ENCODE measurements at regions of chr17 and their contacts with region 1.

Region 1: DNA sequence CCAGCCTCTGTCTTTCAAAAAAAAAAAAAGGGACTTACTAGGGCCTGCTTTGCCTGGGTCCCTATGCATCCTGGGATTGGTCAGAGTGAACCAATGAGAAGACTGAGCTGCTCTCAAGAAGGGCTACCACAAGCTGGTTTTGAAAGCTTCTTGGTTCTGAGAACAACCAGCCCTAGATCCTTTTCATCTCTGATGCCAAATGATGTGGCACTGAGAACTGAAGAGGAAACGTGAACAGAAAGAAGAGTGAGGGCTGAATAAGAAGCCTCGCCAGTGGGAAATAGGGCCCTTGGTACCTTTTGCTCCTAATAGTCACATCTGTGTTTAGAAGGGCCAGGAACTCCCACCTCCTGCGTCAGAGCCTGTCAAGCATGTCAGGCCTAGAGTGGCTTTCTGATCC is 10.7 kb downstream of the TACO1 start:
- DNase-seq: no peak
- H3K4me3 ChIP-seq: no peak overlapping the region
- H3K27ac ChIP-seq: no peak overlapping the region
- H3K4me1 ChIP-seq: peaks cover 0 to 1% (median 0%) of the 10 kb centered on the region in 4 experiments
- H3K27me3 ChIP-seq: no peaks in the 10 kb centered on the region

Region 2: DNA sequence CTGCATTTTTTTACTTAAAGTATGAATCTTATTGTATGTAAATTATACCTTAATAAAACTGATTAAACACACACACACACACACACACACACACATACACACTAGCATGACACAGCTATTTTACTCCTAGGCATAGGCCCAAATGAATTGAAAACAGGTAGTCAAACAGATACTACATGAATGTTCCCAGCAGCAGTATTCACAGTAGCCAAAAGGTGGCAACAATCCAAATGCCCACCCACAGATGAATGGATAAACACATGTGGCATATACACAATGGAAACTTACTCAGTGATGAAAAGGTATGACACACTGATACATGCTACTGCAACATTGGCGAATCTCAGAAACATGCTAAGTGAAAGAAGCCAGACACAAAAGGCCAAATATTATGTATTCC is 388.7 kb before region 1 on chr17:
- CTCF ChIA-PET with region 1: no interaction called
- POLR2A ChIA-PET with region 1: no interaction called
- DNase-seq: peak in 2 of 3 donors; percentile 15 to 24
- H3K4me3 ChIP-seq: no peak overlapping the region
- H3K27ac ChIP-seq: no peak overlapping the region
- H3K4me1 ChIP-seq: no peaks in the 10 kb centered on the region
- H3K27me3 ChIP-seq: no peaks in the 10 kb centered on the region

Region 3: GRCh38 chr17:63600569-63601438 is 10.6 kb before region 1 on chr17 and contains the start of gene TACO1:
- CTCF ChIA-PET with region 1: interaction called, 25 read pairs
- POLR2A ChIA-PET with region 1: interaction called, 3 read pairs
- DNase-seq: peak; percentile 82 to 84 (median 82)
- H3K4me3 ChIP-seq: peak within 1 kb of the TSS; percentile 60 to 97 (median 92)
- H3K27ac ChIP-seq: peak within 1 kb of the TSS; percentile 68 to 85
- H3K4me1 ChIP-seq: peaks cover 8 to 27% (median 13%) of the 10 kb centered on the region in 4 experiments
- H3K27me3 ChIP-seq: no peaks in the 10 kb centered on the region

Region 4: DNA sequence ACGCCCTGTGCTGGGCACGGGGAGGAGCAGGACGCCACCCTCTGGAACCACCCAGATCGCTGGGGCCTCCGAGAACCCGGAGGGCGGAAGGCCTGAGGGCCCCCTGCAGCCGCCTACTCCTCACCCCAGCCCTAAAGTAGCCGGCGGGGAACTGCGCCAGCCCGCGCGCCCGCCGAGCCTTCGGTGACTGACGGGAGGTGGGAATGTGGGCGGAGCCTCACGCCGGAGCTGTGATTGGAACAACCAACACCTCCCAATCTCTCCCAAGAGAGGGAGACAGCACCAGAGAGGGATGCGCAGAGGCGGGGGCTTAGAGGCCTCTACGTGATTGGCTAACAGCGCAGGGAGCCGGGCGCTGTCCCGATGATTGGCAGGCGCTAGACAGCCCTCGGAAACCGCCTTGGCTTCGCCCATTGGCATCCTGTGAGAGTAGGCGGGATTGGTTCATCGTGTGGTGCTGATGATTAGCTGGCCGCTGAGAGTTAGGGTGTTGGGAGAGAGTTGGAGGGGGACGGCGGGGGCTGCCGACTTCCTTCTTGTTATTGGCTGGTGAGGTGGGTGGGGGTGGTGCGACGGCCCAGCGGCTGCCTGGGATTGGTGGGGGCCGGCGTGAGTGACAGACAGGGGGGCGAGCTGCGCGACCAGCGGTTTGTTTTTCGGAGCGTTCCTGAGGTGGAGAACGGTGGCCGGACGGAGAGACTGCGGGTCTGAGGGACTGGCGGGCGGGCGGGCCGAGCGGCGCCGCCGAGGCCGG is 10.6 kb after region 1 on chr17 and contains the start of gene MAP3K3:
- CTCF ChIA-PET with region 1: interaction called, 22 read pairs
- POLR2A ChIA-PET with region 1: no interaction called
- DNase-seq: peak; percentile 100
- H3K4me3 ChIP-seq: peak within 1 kb of the TSS; percentile 62 to 90 (median 81)
- H3K27ac ChIP-seq: peak within 1 kb of the TSS; percentile 58 to 68
- H3K4me1 ChIP-seq: peaks cover 14 to 36% (median 22%) of the 10 kb centered on the region in 4 experiments
- H3K27me3 ChIP-seq: no peaks in the 10 kb centered on the region

Region 5: DNA sequence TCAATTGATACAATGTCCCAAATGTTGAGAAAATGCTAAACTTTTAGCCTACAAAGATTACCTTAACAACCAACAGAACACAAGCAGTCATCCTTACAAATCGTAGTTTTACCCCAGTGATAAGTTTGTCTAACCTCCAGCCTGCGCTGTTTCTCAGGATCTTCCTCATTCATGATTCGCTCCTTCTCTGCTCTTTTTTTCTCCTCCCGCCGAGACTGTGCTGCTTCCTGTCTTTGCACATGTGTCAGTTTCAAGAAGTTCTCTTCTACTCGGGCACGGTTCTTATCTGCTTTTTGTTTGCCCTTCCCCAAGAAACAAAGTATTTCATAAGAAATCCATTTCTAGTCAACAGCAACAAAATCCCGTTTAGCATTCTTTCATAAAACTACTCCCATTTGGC is 140.5 kb after region 1 on chr17:
- CTCF ChIA-PET with region 1: no interaction called
- POLR2A ChIA-PET with region 1: no interaction called
- DNase-seq: peak; percentile 70 to 88 (median 85)
- H3K4me3 ChIP-seq: peak overlapping the region in 6 of 7 experiments; percentile 31 to 67 (median 50)
- H3K27ac ChIP-seq: peak overlapping the region in 1 of 2 experiments; percentile 63
- H3K4me1 ChIP-seq: peaks cover 4 to 26% (median 21%) of the 10 kb centered on the region in 4 experiments
- H3K27me3 ChIP-seq: no peaks in the 10 kb centered on the region